Mammary epithelial cell (primary cell): ENCODE measurements at regions of chr14 and their contacts with region 1.

Region 1: DNA sequence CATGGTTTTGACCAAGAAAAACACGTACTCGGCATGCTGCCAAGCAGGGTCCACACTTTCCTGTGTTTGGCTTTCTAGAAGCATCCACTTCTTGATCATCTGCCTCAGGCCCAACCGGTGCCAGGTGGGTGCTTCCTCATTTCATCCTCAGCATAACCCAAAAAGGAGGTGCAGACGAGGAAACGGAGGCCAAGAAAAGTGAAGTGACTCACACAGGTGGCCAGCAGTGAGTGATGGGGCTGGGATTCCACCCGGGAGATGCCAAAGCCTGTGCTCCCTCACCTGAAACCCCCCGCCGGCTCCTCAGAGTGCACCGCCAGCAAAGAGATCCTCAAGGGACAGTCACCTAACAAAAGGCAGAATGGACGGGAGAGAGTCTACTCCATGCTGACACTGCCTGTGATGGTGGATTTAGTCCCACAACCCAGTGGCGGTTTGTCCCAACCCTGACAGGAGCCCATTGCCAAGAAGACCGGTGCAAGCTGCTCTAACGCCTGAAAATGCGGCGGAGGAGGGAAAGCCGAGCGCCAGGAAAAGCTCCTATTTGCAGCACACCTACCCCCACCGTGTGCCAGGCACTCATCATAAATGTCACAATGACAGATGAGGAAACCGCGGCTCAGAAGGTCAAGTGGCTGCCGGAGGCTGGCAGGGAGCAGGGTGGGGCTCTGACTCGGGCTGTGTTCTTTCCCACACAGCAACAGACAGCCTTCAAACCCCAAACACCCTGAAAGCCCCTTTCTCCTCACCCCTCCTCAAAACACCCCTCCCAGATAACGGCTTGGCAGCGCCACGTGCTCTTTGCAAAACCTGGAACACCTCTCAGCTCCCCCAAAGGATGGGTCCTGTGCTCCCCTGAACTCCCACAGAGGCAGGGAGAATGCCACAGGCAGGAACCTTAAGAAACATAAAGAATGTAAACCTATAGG is 18.8 kb downstream of the BCL11B start:
- DNase-seq: no peak
- H3K4me3 ChIP-seq: no peak overlapping the region
- H3K27ac ChIP-seq: no peak overlapping the region
- H3K4me1 ChIP-seq: peaks cover 4% of the 10 kb centered on the region
- H3K27me3 ChIP-seq: no peaks in the 10 kb centered on the region
- CTCF ChIP-seq: no peak

Region 2: DNA sequence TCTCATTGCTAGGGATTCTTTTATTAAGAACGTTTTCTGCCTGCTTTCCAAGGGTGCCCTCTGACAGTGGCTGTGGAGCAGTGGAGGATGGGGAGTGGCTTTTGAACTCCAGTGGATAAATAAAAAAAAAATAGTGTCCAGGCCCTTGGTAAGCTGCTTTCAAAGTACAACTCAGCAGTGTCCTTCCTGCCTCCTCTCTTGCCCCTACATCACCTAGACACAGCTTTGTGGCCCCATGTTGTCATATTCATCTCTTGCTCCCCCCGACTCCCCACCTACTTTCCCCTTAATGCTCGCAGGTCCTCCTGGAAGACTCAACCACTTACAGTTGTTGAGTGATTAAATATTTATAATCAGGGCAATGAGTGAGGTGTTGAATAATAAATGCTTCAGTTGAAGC is 862.1 kb before region 1 on chr14:
- CTCF ChIA-PET with region 1: no interaction called
- dilution Hi-C with region 1: loop called (anchors 10 kb)
- in situ Hi-C with region 1: no loop called
- intact Hi-C with region 1: no loop called
- DNase-seq: no peak
- H3K4me3 ChIP-seq: no peak overlapping the region
- H3K27ac ChIP-seq: no peak overlapping the region
- H3K4me1 ChIP-seq: no peaks in the 10 kb centered on the region
- H3K27me3 ChIP-seq: peaks cover 2% of the 10 kb centered on the region
- CTCF ChIP-seq: no peak